ENCODE measurements at regions of chr19 and their contacts with region 1.

Region 1: DNA sequence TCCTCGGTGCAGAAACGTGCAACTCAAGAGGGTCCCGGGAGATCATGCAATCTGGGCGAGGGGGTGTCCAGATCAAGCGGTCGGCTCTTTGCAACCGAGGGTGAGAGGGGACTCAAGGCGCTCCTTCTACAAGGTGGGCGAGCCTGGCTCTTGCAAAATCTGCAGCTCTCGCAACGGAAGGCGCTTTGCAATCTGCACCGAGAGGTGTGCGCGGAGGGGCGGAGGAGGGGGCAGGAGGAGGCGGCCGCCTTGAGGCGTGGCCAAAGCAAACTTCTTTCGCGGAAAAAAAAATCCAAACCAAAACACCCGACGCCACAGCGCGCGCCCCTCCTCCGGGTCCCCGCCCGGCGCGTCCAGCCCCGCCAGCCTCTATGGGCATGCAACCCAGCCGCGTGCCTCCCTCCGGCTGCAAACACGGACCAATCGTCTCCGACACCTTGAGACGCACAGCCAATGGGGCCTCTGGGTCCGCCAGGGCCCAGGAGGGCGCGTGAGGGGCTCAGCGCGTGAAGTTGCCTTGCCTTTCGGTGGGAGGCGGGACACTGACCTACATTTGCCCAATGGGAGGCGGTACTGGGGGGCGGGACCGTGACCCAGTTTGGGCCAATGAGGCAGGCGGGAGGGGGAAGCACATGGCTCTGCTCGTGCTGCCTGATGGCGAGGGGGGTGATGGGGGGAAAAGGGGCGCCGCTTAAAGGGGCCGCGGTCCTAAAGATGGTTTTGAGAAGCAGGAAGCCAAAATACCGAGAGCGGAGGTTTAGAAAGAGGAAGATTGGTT is at the start of gene DBP:
- DNase-seq: peak; percentile 84

Region 2: DNA sequence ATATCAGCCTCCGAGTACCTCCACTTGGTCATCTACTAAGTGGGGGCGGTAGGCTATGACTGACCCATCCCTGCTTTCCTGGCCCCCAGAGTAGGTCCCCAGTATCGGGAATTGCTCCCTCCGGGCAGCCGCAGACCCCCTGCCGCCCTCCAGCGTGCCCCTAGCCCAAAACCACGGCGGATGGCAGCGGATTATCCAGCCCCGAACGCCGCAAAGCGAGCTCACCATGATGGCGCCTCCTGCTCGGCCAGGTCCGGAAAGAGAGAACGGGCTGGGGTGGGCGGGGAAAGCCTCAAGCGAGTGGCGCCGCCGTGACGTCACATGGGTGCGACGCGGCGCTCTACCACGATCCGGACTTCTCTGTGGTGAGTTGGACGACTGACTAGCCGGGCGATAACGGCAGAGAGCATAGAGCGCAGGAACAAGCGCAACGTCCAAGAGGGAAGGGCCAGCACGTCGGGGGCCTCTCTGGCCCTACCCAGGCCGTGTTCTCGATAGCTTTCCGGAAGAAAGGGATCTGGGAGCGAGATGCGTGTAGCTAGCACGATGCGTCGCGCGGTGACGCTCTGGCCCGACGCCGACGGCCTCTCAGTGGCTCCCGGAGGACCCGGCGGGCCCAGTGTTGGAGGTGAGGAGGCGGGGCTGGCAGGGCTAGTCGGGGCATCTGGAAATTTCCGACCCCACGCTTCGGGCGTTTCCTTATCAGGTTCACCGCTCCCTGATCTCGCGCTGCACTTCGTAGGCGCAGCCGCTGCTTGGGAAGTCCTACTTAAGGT is 18.3 kb before region 1 on chr19 and contains the starts of genes RPL18 and SPHK2:
- CTCF ChIA-PET with region 1: no interaction called
- POLR2A ChIA-PET with region 1: interaction called, 88 read pairs
- DNase-seq: peak; percentile 96

Region 3: DNA sequence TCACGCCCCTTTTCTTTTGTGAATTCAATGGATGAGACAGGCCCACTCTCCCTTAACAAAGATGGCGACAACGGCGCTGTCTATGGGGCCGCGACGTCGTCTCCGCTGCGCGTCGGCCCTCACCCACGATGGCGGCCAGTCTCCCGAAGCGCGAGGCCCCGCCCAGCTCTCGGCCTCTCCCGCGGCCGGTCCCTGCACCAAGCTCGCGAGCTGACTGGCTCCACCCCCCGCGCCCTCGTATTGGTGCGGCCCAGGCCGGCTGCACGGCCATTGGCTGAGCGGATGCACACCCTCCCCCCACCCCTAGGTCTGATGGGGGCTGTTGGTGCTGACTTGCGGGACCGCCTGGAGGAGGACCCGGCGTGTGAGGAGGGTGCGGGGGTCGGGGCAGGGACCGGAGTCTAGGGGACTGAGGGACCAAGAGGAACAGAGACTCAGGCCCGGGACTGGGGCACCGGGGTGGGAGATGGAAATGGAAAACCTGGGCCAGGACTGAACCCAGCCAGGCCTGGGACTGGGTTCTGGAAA is 13.2 kb before region 1 on chr19:
- CTCF ChIA-PET with region 1: no interaction called
- POLR2A ChIA-PET with region 1: interaction called, 88 read pairs
- DNase-seq: peak; percentile 90

Measured in HEK293T (cell line).